ENCODE measurements at regions of chr17 and their contacts with region 1.

Region 1: GRCh38 chr17:74089869-74090464 is 113.5 kb upstream of the RPL38 start:
- DNase-seq: peak; percentile 73
- CTCF ChIP-seq: peak; percentile 81

Region 2: DNA sequence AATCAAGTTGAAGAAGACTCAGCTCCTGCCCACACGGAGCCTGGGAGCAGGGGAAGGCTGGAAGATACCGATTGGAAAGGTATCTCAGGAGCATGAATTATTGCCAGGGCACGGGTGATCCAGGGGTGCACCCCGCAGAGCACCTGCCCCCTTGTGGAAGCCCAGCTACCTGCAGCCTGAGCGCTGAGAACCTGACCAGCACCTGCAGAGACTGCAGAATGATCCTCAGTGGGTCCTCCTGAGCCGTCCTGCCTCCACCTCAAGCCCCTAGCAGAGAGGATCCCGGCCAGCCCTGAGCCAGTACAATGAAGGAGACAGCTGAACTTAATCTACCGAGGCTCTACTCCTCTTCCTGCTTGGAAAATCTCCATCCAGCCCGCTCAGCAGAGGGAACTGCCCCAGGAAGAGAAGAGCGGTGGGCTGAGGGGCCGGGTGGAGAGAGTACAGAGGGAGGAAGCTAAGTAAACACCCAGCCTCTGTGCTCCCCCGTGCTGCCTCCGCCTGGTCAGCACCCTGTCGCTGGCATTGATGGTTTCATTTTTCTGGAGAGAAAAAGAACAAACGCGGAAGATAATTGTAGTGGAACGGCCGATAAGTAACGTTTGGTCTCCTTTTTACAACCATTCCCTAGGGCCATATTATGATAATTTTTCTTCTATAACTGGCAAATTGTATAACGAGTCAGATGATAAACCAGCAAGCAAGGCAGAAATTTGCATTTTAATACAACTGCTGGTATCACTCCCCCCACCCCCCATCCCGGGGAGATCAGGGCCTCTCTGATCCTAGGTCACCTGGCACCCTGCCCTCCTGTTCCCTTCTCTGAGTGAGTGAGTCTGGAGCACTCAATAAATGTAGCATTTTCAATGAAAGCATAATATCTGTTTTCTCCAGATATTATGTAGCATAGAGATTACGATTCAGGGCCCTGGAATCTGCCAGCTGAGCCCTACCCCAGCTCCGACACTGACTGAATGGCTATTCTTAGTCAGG is 91.0 kb before region 1 on chr17:
- CTCF ChIA-PET with region 1: no interaction called
- POLR2A ChIA-PET with region 1: no interaction called
- DNase-seq: peak; percentile 77
- CTCF ChIP-seq: peak; percentile 76

Region 3: DNA sequence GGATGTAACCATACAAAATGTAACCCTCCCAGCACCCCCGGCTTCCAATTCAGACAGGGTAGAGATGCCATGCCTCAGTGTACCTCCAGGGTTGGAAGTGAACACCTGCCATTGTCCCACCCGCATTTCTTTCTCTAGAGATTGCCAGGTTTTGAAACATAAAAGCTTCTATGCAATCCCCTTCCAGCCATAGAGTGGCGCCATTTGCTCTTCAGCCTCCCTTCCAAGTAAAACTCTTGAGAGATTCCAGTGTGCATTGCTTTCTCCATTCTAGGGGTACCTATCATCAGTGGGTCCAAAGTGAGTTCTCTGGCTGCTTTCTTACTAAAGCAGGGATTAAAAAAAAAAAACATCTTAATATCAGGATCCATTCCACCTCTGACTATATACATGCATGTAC is 19.6 kb before region 1 on chr17:
- CTCF ChIA-PET with region 1: interaction called, 10 read pairs
- POLR2A ChIA-PET with region 1: no interaction called
- DNase-seq: no peak
- CTCF ChIP-seq: no peak

Region 4: DNA sequence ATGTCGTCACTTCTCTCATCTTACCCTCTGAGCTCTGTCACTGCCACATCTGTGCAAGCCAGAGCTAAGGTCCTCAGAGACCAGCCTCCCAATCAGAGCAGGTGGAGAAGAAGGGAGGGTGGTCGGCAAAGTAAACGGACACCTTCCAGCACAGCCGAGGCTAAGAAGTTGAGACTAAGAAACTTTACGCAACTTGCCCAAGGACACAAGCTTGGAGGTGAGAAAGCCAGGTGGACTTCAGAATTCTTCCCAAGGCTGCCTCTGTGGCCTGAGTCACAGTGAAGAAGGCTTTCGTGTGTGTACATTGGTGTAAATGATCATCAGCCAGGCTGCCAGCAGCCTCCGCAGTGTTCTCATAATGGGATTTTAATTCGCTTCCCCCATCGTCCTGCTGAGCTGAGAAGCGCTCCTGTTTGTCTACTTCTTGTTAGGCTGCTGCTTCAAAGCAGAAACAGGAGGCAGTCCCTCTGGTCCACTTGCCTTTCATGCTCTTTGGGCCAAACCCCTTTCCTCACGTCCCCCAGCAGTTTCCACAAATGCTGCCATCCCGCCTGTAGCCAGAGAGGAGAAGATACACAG is 11.5 kb before region 1 on chr17:
- CTCF ChIA-PET with region 1: interaction called, 15 read pairs
- POLR2A ChIA-PET with region 1: no interaction called
- DNase-seq: no peak
- CTCF ChIP-seq: no peak

Measured in GM10248 (cell line).